Activated CD4-positive, alpha-beta memory T cell treated with anti-CD3 and anti-CD28 coated beads for 36 hours (primary cell): ENCODE measurements at regions of chr22 and their contacts with region 1.

Region 1: DNA sequence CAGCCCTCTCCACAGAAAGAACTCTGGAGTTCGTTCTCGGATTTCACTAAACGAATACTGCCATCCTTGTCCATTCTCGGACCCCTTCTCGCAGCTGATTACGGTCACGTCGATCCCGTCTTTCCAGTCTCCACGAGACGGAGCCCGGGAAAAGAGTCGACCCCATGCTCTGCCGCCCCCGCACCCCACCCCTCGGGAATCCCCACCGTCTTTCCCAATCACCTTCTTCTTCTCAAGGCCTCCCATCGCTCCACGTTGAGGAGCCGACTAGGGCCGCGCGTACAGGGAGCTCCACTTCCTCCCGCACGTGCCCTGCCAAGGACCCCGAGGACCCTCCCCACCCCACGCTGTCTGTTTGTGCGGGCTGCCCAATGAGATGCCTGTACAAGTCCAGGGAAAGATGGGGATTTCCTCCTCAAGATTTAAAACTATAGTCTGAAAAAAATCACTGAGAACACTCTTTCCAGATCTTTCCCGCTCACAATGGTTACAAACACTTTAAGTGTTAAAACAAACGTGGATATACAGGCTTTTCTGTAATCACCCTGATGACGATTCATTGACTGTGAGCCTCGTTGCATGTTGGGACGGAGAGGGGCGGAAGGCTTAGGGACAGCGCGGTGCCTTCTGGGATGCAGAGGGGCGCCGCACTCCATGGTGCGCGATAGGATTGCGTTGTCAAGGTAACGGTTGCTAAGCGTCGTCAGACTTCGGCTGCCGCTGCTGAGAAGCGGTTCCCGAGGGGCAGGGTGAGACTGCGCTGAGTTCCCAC is at the start of gene PES1:
- DNase-seq: peak; percentile 96
- H3K4me3 Mint-ChIP-seq: no peak within 1 kb of the TSS
- H3K27ac Mint-ChIP-seq: no peak within 1 kb of the TSS
- H3K4me1 Mint-ChIP-seq: peaks cover 4% of the 10 kb centered on the region
- H3K27me3 Mint-ChIP-seq: peaks cover 7% of the 10 kb centered on the region
- total RNA-seq, gene PES1: 99.3 to 99.6 TPM

Region 2: DNA sequence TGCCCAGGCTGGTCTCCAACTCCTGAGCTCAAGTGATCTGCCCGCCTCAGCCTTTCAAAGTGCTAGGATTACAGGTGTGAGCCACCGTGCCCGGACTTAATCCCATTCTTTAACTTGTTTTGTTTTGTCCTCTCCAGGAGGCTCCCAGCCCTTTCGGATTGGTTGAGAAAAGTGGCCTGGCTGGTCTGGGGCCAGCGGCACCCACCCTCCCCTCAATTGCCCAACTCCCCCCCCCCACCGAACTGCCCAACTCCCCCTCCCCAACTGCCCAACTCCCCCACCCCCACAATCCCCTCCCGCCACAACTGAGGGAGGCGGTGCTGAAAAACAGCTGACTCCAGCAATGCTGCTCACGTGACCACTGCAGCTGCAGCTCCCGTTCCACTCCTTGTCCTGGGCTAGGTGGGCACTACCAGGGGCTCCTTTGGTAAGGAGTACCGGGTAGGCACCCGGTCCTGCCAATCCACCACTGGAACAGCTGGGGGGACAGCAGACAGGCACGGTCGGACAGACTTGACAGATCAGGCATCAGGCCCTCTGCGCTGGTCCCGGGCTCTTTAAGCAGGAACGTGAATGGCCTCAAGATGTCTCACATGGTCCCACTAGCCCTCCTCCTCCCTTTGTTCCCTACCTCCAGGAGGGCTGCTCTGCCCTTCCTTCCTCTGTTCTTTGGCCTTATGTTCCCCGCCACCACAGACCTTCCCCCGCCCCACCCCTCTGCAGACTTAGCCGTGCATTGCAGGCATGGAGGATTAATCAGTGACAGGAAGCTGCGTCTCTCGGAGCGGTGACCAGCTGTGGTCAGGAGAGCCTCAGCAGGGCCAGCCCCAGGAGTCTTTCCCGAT is 14.9 kb after region 1 on chr22 and contains the start of gene TCN2:
- CTCF ChIA-PET with region 1: interaction called, 33 read pairs
- POLR2A ChIA-PET with region 1: interaction called, 4 read pairs
- intact Hi-C with region 1: loop called (anchors 1 kb)
- DNase-seq: peak; percentile 76
- H3K4me3 Mint-ChIP-seq: peak within 1 kb of the TSS; percentile 74
- H3K27ac Mint-ChIP-seq: peak within 1 kb of the TSS; percentile 54
- H3K4me1 Mint-ChIP-seq: peaks cover 33% of the 10 kb centered on the region
- H3K27me3 Mint-ChIP-seq: peaks cover 1% of the 10 kb centered on the region
- total RNA-seq, gene TCN2: 0.19 to 0.31 TPM

Region 3: DNA sequence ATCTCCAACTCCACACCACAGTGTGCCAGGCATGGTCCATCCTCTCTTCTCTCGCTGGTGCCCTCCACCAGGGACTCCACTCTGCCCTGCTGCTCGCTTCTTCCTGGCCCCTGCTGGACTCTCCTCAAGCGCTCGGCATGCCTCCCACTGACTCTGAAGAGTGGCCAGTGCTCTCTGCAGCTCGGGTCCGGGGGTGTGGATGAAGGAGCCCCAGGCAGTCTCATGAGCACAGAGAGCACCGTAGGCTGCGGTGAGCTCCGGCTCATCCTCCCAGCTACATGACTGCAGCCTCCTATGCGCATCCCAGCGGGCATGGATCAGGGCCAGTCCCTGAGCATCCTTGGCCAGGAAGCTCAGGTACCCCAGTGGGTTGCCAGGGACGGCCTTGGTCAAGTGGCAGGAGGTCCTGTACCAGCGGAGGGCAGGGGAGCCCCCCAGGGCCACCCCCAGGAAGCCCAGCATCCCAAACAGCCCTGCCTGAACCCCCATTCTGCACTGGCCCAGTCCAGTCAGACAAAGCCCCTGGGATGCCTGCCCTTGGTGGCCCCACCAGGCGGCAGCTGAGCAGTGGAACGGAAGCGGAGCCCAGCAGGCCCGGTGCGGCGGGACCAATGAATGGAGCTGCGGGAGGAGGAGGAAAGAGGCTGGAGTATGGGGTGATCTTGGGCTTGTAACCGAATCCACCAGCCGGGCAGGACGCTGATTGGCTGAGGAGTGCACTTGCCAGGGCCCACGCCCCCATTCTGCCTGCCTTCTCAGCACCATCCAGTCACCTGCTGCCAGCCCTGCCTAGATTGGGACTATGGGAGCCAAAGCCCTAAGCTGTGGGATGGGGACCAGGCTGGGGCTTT is 548.3 kb after region 1 on chr22 and contains the start of gene PLA2G3:
- CTCF ChIA-PET with region 1: no interaction called
- POLR2A ChIA-PET with region 1: no interaction called
- intact Hi-C with region 1: no loop called
- DNase-seq: no peak
- H3K4me3 Mint-ChIP-seq: no peak within 1 kb of the TSS
- H3K27ac Mint-ChIP-seq: no peak within 1 kb of the TSS
- H3K4me1 Mint-ChIP-seq: peaks cover 2% of the 10 kb centered on the region
- H3K27me3 Mint-ChIP-seq: no peaks in the 10 kb centered on the region
- total RNA-seq, gene PLA2G3: not detected